ENCODE measurements at regions of chr2 and their contacts with region 1.

Region 1: DNA sequence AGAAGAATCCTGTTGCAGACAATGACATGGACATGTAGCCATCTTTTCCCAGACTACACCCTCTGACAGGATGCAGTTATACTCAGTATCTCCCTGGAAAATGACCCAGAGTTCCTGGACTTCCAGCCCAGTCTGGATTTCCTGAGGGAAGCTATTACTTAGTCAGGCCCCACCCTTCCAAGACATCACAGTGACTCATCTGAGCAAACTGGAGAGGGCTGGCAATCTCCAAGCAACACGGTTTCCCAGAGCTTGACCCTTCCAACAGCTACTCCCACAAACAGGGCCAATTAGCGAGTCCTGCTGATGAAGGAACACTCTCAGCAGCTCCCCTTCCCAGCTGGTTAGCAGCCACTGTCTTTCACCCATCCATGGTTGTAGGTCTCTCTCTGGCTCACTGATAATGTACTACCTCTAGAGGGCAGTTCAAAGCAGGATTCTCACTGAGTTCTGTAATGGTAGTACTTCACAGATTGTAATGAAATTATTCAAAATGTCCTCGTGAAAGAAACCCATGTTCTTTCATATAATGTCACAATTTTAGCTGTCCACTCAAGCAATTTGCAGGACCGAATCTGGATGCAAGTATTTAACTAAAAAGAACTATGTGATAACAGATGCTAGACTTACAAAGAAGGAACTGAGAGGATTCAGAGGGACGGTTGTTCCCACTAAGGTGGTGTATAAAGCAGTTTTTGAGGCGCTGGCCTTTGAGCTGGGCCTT is 110.2 kb downstream of the MDH1 start:
- DNase-seq: peak; percentile 70 to 78
- H3K4me3 ChIP-seq: no peak overlapping the region
- H3K27ac ChIP-seq: peak overlapping the region; percentile 68 to 71
- H3K4me1 ChIP-seq: peaks cover 0 to 4% of the 10 kb centered on the region in 2 donors
- H3K27me3 ChIP-seq: no peaks in the 10 kb centered on the region
- CTCF ChIP-seq: peak; percentile 58 to 69 (median 62)
- POLR2A ChIP-seq: no peak

Region 2: DNA sequence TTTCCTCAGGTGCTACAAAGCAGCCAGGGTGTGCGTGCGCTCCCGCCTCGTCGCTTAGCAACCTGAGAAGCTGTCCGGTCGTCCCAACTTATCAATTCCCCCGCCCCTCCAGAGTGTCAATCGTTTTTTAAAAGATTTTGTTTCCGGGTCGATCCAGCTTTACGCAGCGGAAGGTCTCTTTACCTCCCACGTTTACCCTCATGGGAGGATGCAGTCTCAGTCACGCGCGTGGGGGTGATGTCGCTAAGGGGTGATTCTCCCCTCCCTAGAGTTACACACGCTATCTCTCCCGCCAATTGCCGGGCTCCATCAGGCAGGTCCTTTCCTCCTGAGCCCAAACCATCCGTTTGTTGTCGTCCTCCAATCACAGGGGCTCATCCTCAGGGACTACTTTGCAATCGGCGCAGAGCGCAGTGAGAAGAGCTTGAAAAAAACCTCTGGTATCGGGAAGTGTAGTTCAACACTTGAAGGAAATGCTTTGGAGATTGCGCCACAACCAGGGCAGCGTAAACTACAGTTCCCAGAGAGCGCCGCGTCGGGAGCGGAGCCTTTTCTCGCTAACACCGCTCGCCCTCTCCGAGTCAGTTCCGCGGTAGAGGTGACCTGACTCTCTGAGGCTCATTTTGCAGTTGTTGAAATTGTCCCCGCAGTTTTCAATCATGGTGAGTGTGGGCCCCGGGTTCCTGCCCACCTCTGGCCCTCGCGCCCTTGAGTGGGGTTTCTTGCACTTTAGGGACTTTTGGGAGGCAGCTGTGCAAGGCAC is 110.4 kb before region 1 on chr2 and contains the starts of genes MDH1 and WDPCP:
- intact Hi-C with region 1: no loop called
- DNase-seq: peak; percentile 93 to 95
- H3K4me3 ChIP-seq: peak within 1 kb of the TSS; percentile 80 to 82
- H3K27ac ChIP-seq: peak within 1 kb of the TSS; percentile 84 to 86
- H3K4me1 ChIP-seq: no peaks in the 10 kb centered on the region
- H3K27me3 ChIP-seq: no peaks in the 10 kb centered on the region
- CTCF ChIP-seq: no peak
- POLR2A ChIP-seq: peak; percentile 58 to 65
- total RNA-seq, gene MDH1: 80.1 to 132 (median 101) TPM
- total RNA-seq, gene WDPCP: 8.8 to 39.8 (median 29.7) TPM

Region 3: GRCh38 chr2:63849381-63850203 is 150.6 kb after region 1 on chr2:
- intact Hi-C with region 1: loop called (anchors 10 kb)
- DNase-seq: no peak
- H3K4me3 ChIP-seq: no peak overlapping the region
- H3K27ac ChIP-seq: peak overlapping the region in 1 of 2 donors; percentile 43
- H3K4me1 ChIP-seq: peaks cover 0 to 13% of the 10 kb centered on the region in 2 donors
- H3K27me3 ChIP-seq: no peaks in the 10 kb centered on the region
- CTCF ChIP-seq: no peak
- POLR2A ChIP-seq: no peak

Region 4: GRCh38 chr2:63888490-63889402 is 189.8 kb after region 1 on chr2:
- intact Hi-C with region 1: no loop called
- DNase-seq: peak in 1 of 2 donors; percentile 22
- H3K4me3 ChIP-seq: no peak overlapping the region
- H3K27ac ChIP-seq: no peak overlapping the region
- H3K4me1 ChIP-seq: no peaks in the 10 kb centered on the region
- H3K27me3 ChIP-seq: no peaks in the 10 kb centered on the region
- CTCF ChIP-seq: peak; percentile 49 to 66 (median 58)
- POLR2A ChIP-seq: no peak